ENCODE measurements at regions of chr3 and their contacts with region 1.

Region 1: DNA sequence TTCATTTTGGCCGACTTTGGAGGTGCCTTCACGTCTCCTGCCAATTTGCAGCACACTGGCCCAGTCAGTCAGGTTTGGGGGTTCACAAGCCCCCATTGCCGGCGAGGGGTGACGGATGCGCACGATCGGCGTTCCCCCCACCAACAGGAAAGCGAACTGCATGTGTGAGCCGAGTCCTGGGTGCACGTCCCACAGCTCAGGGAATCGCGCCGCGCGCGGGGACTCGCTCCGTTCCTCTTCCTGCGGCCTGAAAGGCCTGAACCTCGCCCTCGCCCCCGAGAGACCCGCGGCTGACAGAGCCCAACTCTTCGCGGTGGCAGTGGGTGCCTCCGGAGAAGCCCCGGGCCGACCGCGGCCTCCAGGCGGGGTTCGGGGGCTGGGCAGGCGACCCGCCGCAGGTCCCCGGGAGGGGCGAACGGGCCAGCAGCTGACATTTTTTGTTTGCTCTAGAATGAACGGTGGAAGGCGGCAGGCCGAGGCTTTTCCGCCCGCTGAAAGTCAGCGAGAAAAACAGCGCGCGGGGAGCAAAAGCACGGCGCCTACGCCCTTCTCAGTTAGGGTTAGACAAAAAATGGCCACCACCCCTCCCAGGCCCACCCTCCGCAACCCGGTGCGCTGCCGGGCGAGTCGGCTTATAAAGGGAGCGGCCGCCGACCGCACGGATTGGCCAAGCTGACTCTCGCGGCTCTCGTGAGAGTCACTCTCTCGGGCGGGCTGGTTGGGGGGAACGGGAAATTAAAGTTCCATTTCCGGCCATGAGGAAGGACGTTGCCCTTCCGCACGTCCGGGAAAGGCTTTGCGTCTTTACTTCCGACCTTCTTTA is at the start of gene TERC:
- DNase-seq: peak; percentile 88
- H3K4me3 Mint-ChIP-seq: peak within 1 kb of the TSS; percentile 90
- H3K27ac Mint-ChIP-seq: peak within 1 kb of the TSS; percentile 92
- H3K4me1 Mint-ChIP-seq: peaks cover 25% of the 10 kb centered on the region
- H3K27me3 Mint-ChIP-seq: no peaks in the 10 kb centered on the region
- total RNA-seq, gene TERC: 7.0 and 9.8 TPM in 2 replicates

Region 2: GRCh38 chr3:169812332-169813235 is 47.9 kb after region 1 on chr3 and contains the starts of genes LRRC34 and LRRIQ4:
- intact Hi-C with region 1: loop called (anchors 2 kb)
- DNase-seq: peak; percentile 66
- H3K4me3 Mint-ChIP-seq: peak within 1 kb of the TSS; percentile 87
- H3K27ac Mint-ChIP-seq: peak within 1 kb of the TSS; percentile 95
- H3K4me1 Mint-ChIP-seq: peaks cover 37% of the 10 kb centered on the region
- H3K27me3 Mint-ChIP-seq: peaks cover 15% of the 10 kb centered on the region
- total RNA-seq, gene LRRC34: 5.6 and 5.9 TPM in 2 replicates
- total RNA-seq, gene LRRIQ4: 0.16 TPM in 2 replicates

Region 3: GRCh38 chr3:169966428-169966950 is 201.8 kb after region 1 on chr3 and contains the start of gene SEC62:
- intact Hi-C with region 1: loop called (anchors 2 kb)
- DNase-seq: peak; percentile 88
- H3K4me3 Mint-ChIP-seq: peak within 1 kb of the TSS; percentile 91
- H3K27ac Mint-ChIP-seq: peak within 1 kb of the TSS; percentile 99
- H3K4me1 Mint-ChIP-seq: peaks cover 41% of the 10 kb centered on the region
- H3K27me3 Mint-ChIP-seq: peaks cover 5% of the 10 kb centered on the region
- total RNA-seq, gene SEC62: 74.2 and 78.4 TPM in 2 replicates

Region 4: GRCh38 chr3:170055209-170055608 is 290.5 kb after region 1 on chr3:
- intact Hi-C with region 1: loop called (anchors 2 kb)
- DNase-seq: no peak
- H3K4me3 Mint-ChIP-seq: no peak overlapping the region
- H3K27ac Mint-ChIP-seq: peak overlapping the region; percentile 24
- H3K4me1 Mint-ChIP-seq: peaks cover 46% of the 10 kb centered on the region
- H3K27me3 Mint-ChIP-seq: no peaks in the 10 kb centered on the region

Region 5: GRCh38 chr3:170572665-170573253 is 808.1 kb after region 1 on chr3:
- intact Hi-C with region 1: loop called (anchors 10 kb)
- DNase-seq: no peak
- H3K4me3 Mint-ChIP-seq: no peak overlapping the region
- H3K27ac Mint-ChIP-seq: peak overlapping the region; percentile 62
- H3K4me1 Mint-ChIP-seq: peaks cover 24% of the 10 kb centered on the region
- H3K27me3 Mint-ChIP-seq: peaks cover 7% of the 10 kb centered on the region

Region 6: DNA sequence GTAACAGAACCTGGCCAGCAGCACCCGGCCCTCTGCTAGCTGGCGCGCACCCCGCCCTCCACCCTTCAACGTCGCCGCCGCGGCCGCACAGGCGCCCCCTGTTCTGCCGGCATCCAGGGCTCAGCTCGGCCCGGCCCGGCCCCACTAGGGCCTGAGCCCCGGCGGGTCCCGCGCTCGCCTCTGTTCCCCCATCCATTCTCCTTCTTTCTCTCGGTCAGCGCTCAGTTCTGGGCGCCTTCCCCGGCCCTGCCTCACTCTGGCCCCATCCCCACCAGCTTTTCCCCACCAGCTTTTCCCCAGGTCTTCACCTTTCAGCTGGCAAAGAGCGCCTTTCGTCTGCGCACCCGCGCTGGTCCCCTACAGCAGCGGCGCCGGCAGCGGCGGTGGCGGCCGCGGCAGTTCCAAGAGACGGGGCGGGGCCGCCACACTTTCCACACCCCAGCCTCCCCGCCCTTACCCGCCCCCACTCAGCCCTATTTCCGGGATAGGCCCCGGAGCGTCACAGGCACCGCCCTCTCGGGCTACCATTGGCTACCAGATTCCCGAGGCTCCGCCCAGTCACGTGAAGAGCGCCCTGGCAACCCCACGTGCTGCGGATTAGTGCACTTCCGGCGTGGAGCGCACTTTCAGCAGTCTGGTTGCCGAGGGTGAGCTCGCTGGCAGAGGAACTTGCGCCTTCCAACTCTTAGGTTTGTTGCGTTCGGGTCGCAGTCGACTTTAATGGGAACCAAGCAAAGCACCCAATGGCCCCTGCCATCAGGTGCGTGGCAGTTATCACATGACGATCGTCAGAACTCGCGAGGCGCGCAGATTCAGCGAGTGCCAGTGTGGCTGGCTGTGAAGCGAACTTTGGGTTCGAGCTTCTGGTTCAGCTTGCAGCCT is 1143.8 kb after region 1 on chr3 and contains the start of gene EIF5A2:
- intact Hi-C with region 1: loop called (anchors 5 kb)
- DNase-seq: peak; percentile 92
- H3K4me3 Mint-ChIP-seq: peak within 1 kb of the TSS; percentile 99
- H3K27ac Mint-ChIP-seq: peak within 1 kb of the TSS; percentile 90
- H3K4me1 Mint-ChIP-seq: peaks cover 20% of the 10 kb centered on the region
- H3K27me3 Mint-ChIP-seq: peaks cover 22% of the 10 kb centered on the region
- total RNA-seq, gene EIF5A2: 9.8 and 10.8 TPM in 2 replicates